ENCODE measurements at regions of chr20 and their contacts with region 1.

Region 1: GRCh38 chr20:31849455-31849925 is 4.1 kb upstream of the FOXS1 start:
- DNase-seq: no peak
- ATAC-seq: no peak
- H3K4me3 ChIP-seq: no peak overlapping the region
- H3K27ac ChIP-seq: no peak overlapping the region
- H3K4me1 ChIP-seq: peaks cover 17% of the 10 kb centered on the region
- CTCF ChIP-seq: no peak
- EP300 ChIP-seq: no peak
- POLR2A ChIP-seq: no peak
- RAD21 ChIP-seq: no peak

Region 2: DNA sequence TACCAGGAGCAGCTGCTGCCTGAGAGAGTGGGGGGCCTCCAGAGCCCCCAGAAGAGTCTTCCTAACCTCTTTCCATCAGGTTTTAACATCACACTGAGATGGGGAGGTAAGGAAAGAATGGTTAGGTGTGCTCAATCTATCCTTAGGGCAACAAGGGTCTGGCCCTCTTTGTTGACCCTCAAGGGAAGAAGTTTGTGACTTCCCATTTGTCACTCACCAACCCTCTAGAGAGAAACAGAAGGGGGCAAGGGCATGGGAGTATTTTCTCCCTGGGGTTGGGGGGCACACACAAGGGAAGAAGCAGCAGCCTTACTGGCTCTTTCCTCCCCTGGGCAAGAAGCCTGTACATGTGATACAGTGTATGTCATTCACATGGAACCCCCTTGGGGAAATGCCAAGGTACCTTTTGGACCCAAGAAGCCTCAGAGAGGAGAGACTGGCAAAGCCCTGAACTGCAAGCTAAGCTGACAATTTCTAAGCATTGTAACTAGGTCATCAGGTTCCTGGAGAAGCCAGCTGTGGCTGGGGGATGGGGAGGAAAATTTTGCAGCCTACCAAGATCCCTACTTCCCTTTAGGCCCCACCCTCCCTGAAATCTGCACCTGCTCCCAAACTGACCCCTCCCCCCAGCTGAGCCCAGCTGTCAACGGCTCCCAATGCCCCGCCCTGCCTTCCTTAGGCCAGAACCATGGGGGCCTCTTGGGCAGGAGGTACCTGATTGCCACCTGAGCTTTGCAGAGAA is 141.3 kb before region 1 on chr20:
- CTCF ChIA-PET with region 1: no interaction called
- POLR2A ChIA-PET with region 1: no interaction called
- DNase-seq: peak in 1 of 2 experiments; percentile 62
- ATAC-seq: peak in 1 of 2 experiments; percentile 3; a peak in 1 of 6 replicates
- H3K4me3 ChIP-seq: no peak overlapping the region
- H3K27ac ChIP-seq: peak overlapping the region; percentile 89 to 95
- H3K4me1 ChIP-seq: peaks cover 94% of the 10 kb centered on the region
- CTCF ChIP-seq: no peak
- EP300 ChIP-seq: no peak
- POLR2A ChIP-seq: no peak
- RAD21 ChIP-seq: no peak

Region 3: DNA sequence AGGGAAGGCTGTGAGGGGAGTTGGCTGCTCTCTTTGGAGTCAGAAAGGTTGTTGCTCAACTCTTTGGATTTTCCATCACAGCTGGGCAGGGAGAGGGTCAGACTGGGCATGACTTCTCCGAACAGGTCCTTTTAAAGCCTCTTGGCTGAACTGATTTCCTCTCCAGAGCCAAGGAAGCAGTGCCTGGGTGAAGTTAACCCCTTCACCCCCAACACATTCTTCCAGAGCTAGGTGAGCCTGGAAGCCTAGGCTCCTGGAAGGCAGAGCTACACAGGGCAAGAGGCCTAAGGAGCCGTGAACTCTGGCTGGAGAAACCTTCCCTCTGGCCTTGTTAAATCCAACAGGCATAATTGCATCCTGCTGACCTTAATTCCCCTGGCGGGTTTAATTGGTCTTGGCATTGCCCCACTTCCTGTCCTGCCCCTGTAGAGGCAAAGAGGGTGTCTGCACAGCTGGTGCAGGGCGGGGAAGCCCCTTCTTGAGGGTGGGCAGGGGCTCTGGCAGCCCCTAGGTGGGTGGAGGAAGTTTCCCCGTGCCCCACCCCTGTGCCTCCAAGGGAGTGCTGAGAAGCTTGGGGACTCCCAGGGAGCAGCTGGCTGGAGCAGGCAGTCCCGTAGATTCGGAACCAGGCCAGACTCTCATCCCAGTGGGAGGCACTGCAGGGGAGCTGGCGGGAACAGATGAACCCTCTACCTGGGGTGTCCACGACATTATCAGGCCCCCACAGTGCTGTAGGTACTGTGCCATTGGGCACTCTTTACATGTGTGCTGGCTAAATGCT is 33.9 kb before region 1 on chr20:
- CTCF ChIA-PET with region 1: interaction called, 26 read pairs
- POLR2A ChIA-PET with region 1: no interaction called
- DNase-seq: peak in 1 of 2 experiments; percentile 19
- ATAC-seq: peak; percentile 25 to 27; a peak in 3 of 6 replicates
- H3K4me3 ChIP-seq: no peak overlapping the region
- H3K27ac ChIP-seq: no peak overlapping the region
- H3K4me1 ChIP-seq: no peaks in the 10 kb centered on the region
- CTCF ChIP-seq: no peak
- EP300 ChIP-seq: no peak
- POLR2A ChIP-seq: no peak
- RAD21 ChIP-seq: no peak

Region 4: DNA sequence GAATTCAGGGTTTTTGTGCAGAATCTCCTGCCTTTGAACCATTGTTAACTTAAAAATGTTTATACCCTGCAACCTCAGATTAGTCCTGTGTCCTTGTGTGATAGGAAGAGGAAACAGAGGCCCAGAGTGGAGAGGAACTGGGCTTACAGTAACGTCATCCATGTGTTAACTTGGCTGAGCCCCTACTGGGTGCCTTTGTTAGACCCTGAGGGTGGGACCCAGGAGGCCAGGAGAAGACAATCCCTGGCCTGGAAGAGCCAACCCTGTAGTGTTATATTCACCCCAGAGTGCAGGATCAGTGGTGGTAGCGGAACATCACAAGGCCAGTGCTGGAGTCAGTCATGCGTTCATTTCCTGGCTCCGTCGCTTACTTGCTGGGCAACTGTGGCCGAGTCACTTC is 19.8 kb before region 1 on chr20:
- CTCF ChIA-PET with region 1: interaction called, 145 read pairs
- POLR2A ChIA-PET with region 1: no interaction called
- DNase-seq: no peak
- ATAC-seq: no peak
- H3K4me3 ChIP-seq: no peak overlapping the region
- H3K27ac ChIP-seq: no peak overlapping the region
- H3K4me1 ChIP-seq: peaks cover 6% of the 10 kb centered on the region; the same call in 1 of the 3 replicates
- CTCF ChIP-seq: no peak
- EP300 ChIP-seq: no peak
- POLR2A ChIP-seq: no peak
- RAD21 ChIP-seq: no peak

Region 5: DNA sequence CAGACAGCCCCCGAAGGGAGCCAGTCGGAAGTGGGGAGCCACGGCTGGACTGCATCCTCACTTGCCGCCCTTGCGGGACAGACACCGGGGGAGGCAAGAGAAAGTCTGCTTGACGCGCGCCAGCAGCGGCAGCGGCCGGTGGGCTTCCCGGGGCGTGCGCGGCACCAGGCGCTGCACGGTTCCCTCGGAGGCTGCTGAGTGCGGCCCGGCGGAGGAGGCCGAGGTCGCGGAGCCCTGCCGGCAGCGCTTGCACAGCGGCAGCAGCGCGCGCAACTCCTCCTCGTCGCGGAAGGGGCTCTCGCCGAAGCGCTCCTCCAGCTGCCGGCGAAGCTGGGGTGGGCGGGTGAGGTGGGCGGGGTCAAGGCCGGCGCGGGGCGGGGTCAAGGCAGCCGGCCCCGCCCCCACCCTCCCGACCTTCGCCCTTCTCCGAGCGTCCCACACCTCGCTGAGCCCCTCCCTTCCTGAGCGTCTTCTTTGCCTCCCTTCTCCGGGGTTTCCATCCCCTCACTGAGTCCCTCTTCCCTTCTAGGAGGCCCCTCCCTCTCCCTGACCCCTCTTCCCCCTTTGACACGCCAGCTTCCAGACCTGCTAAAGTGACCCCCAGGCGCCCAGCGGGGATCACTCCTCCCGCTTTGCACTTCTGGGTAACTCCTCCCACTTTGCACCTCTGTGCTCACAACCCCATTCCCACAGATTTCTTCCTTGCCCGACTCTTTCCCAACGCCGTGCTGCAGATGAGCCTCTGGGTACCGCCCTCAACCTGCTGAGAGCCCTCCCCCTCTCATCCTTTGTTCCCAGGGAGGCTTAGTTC is 12.1 kb after region 1 on chr20:
- CTCF ChIA-PET with region 1: interaction called, 145 read pairs
- POLR2A ChIA-PET with region 1: interaction called, 3 read pairs
- DNase-seq: peak; percentile 75 to 85
- ATAC-seq: peak; percentile 72 to 88
- H3K4me3 ChIP-seq: peak overlapping the region; percentile 57
- H3K27ac ChIP-seq: peak overlapping the region; percentile 28 to 82; a peak in 5 of 6 replicates
- H3K4me1 ChIP-seq: peaks cover 15% of the 10 kb centered on the region
- CTCF ChIP-seq: no peak
- EP300 ChIP-seq: no peak
- POLR2A ChIP-seq: peak; percentile 50
- RAD21 ChIP-seq: no peak

Region 6: GRCh38 chr20:31879143-31879987 is 29.9 kb after region 1 on chr20:
- CTCF ChIA-PET with region 1: interaction called, 22 read pairs
- POLR2A ChIA-PET with region 1: no interaction called
- DNase-seq: peak; percentile 98
- ATAC-seq: peak; percentile 100
- H3K4me3 ChIP-seq: peak overlapping the region; percentile 61
- H3K27ac ChIP-seq: peak overlapping the region; percentile 70 to 85
- H3K4me1 ChIP-seq: no peaks in the 10 kb centered on the region
- CTCF ChIP-seq: no peak
- EP300 ChIP-seq: no peak
- POLR2A ChIP-seq: peak; percentile 88
- RAD21 ChIP-seq: no peak

Region 7: GRCh38 chr20:31956556-31957526 is 107.4 kb after region 1 on chr20:
- CTCF ChIA-PET with region 1: interaction called, 173 read pairs
- POLR2A ChIA-PET with region 1: interaction called, 4 read pairs
- DNase-seq: no peak
- ATAC-seq: no peak
- H3K4me3 ChIP-seq: no peak overlapping the region
- H3K27ac ChIP-seq: no peak overlapping the region
- H3K4me1 ChIP-seq: no peaks in the 10 kb centered on the region
- CTCF ChIP-seq: no peak
- EP300 ChIP-seq: no peak
- POLR2A ChIP-seq: no peak
- RAD21 ChIP-seq: no peak

Region 8: DNA sequence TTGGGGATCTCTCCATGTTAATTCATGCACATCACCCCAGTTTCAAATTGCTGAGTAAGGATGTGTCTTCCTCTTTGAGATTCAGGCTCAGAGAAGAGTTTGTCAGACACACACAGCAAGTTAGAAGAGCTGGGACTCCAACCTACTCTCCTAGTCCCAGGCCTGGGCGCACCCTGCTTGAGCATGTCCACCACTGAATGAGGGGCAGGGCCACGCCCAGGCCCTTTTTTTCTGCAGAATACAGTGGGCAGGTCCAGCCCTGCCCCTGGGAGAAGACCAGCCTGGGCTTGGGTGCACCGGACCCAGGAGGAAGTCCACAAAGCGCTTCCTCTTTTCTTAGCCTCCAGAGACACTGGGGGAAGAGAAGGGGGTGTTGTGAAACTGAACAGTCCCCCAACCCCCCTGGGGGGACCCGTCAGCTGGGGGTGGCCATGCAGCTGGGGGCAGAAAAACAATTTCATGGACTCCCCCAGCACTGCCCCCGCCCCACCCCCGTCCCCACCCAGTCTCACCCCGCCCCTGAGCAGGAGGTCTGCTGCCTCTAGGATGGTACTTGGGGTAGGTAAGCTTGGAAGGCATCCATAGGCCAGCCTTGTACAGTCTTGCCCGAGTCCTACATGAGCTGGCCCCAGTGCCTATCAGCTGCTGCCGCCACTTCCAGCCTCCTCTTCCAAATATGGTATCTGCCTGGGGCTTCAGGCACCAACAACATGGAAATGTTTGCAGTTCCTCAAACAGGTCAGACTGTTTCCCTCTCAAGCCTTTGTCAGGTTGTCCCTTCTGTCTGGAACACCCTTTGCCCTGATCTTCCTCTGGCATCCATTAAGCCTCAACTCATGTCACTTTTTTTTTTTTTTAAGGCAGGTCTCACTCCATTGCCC is 190.9 kb after region 1 on chr20:
- CTCF ChIA-PET with region 1: interaction called, 193 read pairs
- POLR2A ChIA-PET with region 1: no interaction called
- DNase-seq: no peak
- ATAC-seq: no peak
- H3K4me3 ChIP-seq: no peak overlapping the region
- H3K27ac ChIP-seq: no peak overlapping the region
- H3K4me1 ChIP-seq: peaks cover 16% of the 10 kb centered on the region; the same call in 1 of the 3 replicates
- CTCF ChIP-seq: no peak
- EP300 ChIP-seq: no peak
- POLR2A ChIP-seq: no peak
- RAD21 ChIP-seq: no peak

Measured in A549 (cell line).